Ovary (tissue), 10 donors: ENCODE measurements at regions of chr11 and their contacts with region 1.

Region 1: GRCh38 chr11:2151500-2152257 is 9.3 kb downstream of the INS start:
- DNase-seq: peak; percentile 65 to 86 (median 82)
- H3K4me3 ChIP-seq: no peak overlapping the region
- H3K27ac ChIP-seq: no peak overlapping the region
- H3K4me1 ChIP-seq: peaks cover 2% of the 10 kb centered on the region
- H3K27me3 ChIP-seq: no peaks in the 10 kb centered on the region
- CTCF ChIP-seq: peak; percentile 68 to 89 (median 89)
- EP300 ChIP-seq: no peak
- POLR2A ChIP-seq: no peak

Region 2: DNA sequence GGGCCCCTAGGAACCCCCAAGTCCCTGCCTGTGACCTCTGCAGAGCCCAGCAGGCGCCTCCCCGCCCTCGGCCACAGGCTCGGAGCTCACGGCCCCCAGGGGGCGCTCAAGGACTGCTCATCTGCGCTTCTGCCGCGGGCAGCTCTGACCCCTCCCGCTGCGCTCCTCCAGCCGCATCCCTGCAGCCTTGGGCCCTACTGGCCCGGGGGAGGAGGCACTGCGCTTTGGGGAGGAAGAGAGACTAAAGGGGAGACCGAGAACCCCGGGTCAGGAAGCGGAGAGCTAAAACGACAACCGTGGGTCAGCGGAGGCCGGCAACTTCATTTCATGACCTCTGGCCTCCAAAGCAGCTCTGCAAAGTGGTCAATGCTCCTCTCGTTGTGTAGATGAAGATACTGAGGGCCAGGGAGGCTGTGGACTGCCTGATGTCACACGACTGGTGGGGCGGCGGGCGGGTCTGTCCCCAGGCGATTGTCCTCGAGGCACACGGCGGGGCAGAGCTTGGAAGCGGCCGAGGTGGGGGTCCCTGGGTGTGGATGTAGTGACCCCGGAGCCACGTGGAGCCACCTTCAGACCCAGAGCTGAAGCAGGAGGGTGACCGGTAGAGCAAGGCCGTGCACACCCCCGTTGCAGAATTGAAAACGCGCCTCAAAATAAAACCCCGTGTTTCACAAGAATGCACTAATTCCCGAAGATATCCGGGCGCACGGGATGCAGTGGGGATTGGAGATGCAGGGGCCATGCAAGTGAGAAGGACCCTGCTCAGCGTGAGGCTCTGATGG is 457.4 kb before region 1 on chr11:
- intact Hi-C with region 1: loop called (anchors 2 to 5 kb)
- DNase-seq: peak; percentile 73 to 92 (median 89)
- H3K4me3 ChIP-seq: peak overlapping the region; percentile 6
- H3K27ac ChIP-seq: peak overlapping the region in 1 of 2 donors; percentile 16
- H3K4me1 ChIP-seq: peaks cover 8% of the 10 kb centered on the region
- H3K27me3 ChIP-seq: no peaks in the 10 kb centered on the region
- CTCF ChIP-seq: peak; percentile 82 to 91 (median 85)
- EP300 ChIP-seq: no peak
- POLR2A ChIP-seq: no peak

Region 3: DNA sequence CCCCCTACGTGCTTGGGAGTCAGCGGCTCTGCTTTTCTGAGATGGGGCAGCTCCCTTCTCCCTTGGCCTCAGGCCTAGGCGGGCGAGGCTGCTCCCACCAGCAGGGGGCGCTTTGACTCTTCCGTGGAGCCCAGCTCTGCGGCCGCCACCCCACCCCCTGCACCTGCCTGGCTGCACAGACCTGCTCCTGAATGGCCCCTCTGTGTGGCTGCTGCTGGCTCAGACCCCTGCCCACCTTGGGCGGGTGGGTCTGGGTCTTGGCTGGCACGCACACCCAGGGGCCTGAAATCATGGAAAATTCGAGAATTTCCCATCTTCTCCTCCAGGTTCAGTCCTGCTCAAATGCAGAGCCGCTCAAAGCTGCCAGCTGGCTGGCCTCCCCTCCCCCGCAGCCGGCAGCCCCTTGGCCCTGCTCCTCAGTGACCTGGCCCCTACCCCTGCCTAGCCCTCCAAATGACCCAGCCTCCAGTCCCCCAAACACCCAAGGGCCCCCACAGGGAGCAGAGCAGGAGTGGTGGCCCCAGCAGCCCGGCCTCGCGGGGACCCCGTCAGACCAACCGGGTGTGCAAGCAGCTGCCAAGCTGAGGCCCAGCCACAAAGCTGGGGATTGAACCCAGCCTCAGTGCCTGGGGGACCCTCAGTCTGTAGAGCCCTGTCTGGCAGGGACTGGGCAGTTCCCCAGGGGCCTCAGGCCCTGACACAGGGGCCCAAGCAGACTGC is 269.0 kb before region 1 on chr11:
- intact Hi-C with region 1: loop called in 2 of 4 experiments (anchors 5 kb)
- DNase-seq: peak; percentile 79 to 92 (median 89)
- H3K4me3 ChIP-seq: no peak overlapping the region
- H3K27ac ChIP-seq: no peak overlapping the region
- H3K4me1 ChIP-seq: no peaks in the 10 kb centered on the region
- H3K27me3 ChIP-seq: no peaks in the 10 kb centered on the region
- CTCF ChIP-seq: peak; percentile 85 to 92 (median 92)
- EP300 ChIP-seq: no peak
- POLR2A ChIP-seq: peak; percentile 2

Region 4: DNA sequence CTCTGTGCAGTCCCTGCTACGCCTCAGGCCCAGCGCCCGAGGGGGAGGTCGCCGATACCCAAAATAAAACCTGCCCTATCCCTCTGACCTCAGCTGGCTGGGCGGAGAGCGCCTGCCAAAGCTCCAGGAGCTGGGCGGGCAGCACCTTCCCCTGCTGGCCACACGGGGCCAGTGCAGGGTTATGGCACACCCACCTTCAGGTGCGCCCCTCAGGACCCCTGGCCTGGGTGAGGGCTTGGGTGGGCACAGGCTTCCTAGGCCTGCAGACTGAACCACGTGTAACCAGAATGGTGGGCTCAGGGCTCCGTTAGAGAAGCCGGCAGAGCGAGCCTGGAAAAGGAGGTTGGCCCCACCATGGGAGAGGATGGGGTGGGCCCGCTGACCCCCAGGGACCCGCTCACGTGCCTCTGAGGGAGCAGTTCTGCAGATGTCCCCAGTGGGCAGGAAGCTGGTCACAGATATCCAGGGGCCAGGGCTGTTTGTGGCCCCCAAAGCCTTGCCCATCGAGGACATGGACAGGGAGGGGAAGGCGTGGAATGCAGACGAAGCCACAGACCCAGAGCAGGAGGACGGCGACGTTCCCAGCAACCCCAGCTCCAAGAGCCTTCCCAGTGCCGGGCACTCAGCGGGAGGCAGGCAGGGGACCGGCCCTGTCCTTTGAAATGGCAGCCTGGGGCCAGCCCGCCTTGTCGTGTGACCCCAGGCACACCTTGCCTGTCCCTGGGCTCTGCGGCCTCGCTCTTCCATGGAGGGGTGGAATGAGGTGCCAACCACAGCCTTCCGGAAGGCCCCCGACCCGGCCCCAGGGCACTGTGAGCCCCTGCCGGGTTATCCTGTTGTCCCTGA is 233.8 kb before region 1 on chr11:
- intact Hi-C with region 1: loop called in 2 of 4 experiments (anchors 10 kb)
- DNase-seq: peak in 1 of 5 donors; percentile 34
- H3K4me3 ChIP-seq: no peak overlapping the region
- H3K27ac ChIP-seq: no peak overlapping the region
- H3K4me1 ChIP-seq: peaks cover 4% of the 10 kb centered on the region
- H3K27me3 ChIP-seq: no peaks in the 10 kb centered on the region
- CTCF ChIP-seq: no peak
- EP300 ChIP-seq: no peak
- POLR2A ChIP-seq: no peak